ENCODE measurements at regions of chrX and their contacts with region 1.

Region 1: GRCh38 chrX:53714580-53715345 is 28.2 kb upstream of the HUWE1 start:
- DNase-seq: peak; percentile 16
- ATAC-seq: peak; percentile 72
- H3K4me3 Mint-ChIP-seq: peak overlapping the region; percentile 79
- H3K27ac Mint-ChIP-seq: peak overlapping the region; percentile 96
- H3K4me1 Mint-ChIP-seq: peaks cover 49% of the 10 kb centered on the region
- H3K27me3 Mint-ChIP-seq: no peaks in the 10 kb centered on the region
- CTCF ChIP-seq: no peak

Region 2: DNA sequence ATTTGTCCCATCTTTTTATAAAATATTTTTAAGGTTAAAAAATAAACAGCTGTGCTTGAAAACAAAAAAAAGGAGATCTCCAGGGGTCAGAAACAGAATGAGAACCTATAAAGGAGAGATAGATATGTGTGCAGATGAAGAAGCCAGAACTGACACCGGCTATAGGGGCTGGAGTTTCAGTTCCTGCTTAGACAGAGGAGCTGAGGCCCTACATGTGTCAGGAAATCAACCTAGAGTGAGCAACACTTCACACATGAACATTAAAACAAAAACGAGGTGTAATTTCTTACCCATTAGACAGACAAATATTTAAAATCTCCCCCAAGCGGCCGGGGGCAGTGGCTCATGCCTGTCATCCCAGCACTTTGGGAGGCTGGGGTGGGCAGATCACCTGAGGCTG is 10.5 kb before region 1 on chrX:
- CTCF ChIA-PET with region 1: no interaction called
- POLR2A ChIA-PET with region 1: interaction called, 4 read pairs
- intact Hi-C with region 1: loop called (anchors 1 kb)
- DNase-seq: no peak
- ATAC-seq: peak; percentile 87
- H3K4me3 Mint-ChIP-seq: no peak overlapping the region
- H3K27ac Mint-ChIP-seq: peak overlapping the region; percentile 60
- H3K4me1 Mint-ChIP-seq: peaks cover 10% of the 10 kb centered on the region
- H3K27me3 Mint-ChIP-seq: no peaks in the 10 kb centered on the region
- CTCF ChIP-seq: no peak

Region 3: DNA sequence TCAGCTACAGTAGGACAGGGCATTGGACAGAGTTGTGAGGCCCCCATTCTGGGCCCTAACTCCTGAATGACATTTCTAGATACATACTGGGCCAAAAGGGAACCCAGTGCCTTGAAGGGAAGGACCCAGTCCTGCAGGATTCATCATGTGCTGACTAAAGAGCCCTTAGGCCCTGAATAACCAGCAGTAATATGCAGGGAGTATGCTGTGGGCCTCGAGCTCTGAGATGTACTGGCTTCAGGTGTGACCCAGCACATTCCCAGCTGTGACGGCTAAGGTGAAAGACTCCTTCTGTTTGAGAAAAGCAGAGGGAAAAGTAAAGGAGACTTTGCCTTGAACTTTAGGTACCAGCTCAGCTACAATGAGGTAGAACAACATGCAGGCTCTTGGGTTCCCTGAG is 109.9 kb after region 1 on chrX:
- CTCF ChIA-PET with region 1: no interaction called
- POLR2A ChIA-PET with region 1: no interaction called
- intact Hi-C with region 1: no loop called
- DNase-seq: no peak
- ATAC-seq: no peak
- H3K4me3 Mint-ChIP-seq: no peak overlapping the region
- H3K27ac Mint-ChIP-seq: no peak overlapping the region
- H3K4me1 Mint-ChIP-seq: no peaks in the 10 kb centered on the region
- H3K27me3 Mint-ChIP-seq: no peaks in the 10 kb centered on the region
- CTCF ChIP-seq: no peak